ENCODE measurements at regions of chr18 and their contacts with region 1.

Region 1: GRCh38 chr18:63511286-63511685 is 30.9 kb upstream of the SERPINB12 start:
- H3K4me3 ChIP-seq: no peak overlapping the region
- H3K27ac ChIP-seq: no peak overlapping the region
- H3K4me1 ChIP-seq: peaks cover 3% of the 10 kb centered on the region; the same call in 1 of the 2 replicates
- CTCF ChIP-seq: peak; percentile 46

Region 2: GRCh38 chr18:63523660-63524059 is 12.4 kb after region 1 on chr18:
- CTCF ChIA-PET with region 1: interaction called, 35 read pairs
- POLR2A ChIA-PET with region 1: no interaction called
- H3K4me3 ChIP-seq: no peak overlapping the region
- H3K27ac ChIP-seq: no peak overlapping the region
- H3K4me1 ChIP-seq: no peaks in the 10 kb centered on the region
- CTCF ChIP-seq: no peak

Region 3: GRCh38 chr18:63775166-63775730 is 264.0 kb after region 1 on chr18 and contains the start of gene SERPINB7:
- CTCF ChIA-PET with region 1: no interaction called
- POLR2A ChIA-PET with region 1: no interaction called
- H3K4me3 ChIP-seq: no peak within 1 kb of the TSS
- H3K27ac ChIP-seq: no peak within 1 kb of the TSS
- H3K4me1 ChIP-seq: no peaks in the 10 kb centered on the region
- CTCF ChIP-seq: no peak

Region 4: GRCh38 chr18:63848159-63848558 is 336.9 kb after region 1 on chr18:
- CTCF ChIA-PET with region 1: interaction called, 100 read pairs
- POLR2A ChIA-PET with region 1: no interaction called
- H3K4me3 ChIP-seq: no peak overlapping the region
- H3K27ac ChIP-seq: no peak overlapping the region
- H3K4me1 ChIP-seq: no peaks in the 10 kb centered on the region
- CTCF ChIP-seq: 0 out of 2 replicates have a peak, but pooled peaks have one; percentile 7

Measured in HEK293 (cell line).